Activated CD4-positive, alpha-beta T cell treated with anti-CD3 and anti-CD28 coated beads, Interleukin-2, amount 10 ng/mL, durations not matched to agents 7 days and 5 days (primary cell): ENCODE measurements at regions of chr11 and their contacts with region 1.

Region 1: GRCh38 chr11:120303004-120303637 is 22.0 kb upstream of the TLCD5 start:
- DNase-seq: peak; percentile 77
- H3K4me3 Mint-ChIP-seq: no peak overlapping the region
- H3K27ac Mint-ChIP-seq: no peak overlapping the region
- H3K4me1 Mint-ChIP-seq: no peaks in the 10 kb centered on the region
- H3K27me3 Mint-ChIP-seq: peaks cover 19% of the 10 kb centered on the region

Region 2: DNA sequence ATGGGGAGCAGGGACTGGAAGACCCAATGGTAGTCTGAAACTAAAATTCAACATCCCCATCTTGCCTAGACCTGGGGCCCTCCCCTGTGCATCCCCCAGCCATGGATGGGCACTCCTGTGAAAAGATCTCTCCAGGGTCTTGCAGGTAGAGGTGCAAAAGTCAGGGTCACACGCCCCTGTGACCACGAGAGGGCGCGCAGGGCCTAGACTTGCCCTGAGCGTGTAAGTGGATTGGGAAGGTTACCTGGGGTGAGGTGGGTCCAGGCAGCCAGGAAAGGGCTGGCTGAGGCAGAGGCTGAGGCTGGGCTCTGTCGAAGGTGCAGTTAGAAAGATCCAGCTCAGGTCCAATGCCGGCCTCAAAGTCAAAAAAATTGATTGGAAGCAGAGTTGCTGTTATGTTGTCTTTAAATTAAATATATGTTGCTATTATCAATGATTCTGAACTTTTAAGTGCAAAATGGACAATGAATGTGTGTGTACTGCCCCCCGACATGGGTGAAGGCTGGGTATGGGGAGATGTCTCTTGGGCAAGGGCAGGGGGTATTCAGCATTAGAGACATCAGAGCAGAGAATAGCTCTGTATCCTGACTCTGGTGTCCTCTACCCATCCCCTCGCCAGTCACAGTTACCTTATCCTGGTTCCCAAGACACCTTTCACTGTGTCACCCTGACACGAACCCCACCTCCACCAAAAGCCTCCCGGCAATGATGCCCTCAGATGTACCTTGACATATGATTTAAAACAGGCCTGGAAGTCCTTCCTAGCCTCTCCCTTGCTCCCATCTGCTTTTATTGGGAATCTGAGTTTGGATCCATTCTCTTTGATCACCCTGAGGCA is 67.9 kb before region 1 on chr11:
- CTCF ChIA-PET with region 1: interaction called, 105 read pairs
- POLR2A ChIA-PET with region 1: no interaction called
- DNase-seq: peak; percentile 65
- H3K4me3 Mint-ChIP-seq: no peak overlapping the region
- H3K27ac Mint-ChIP-seq: peak overlapping the region; percentile 47
- H3K4me1 Mint-ChIP-seq: no peaks in the 10 kb centered on the region
- H3K27me3 Mint-ChIP-seq: peaks cover 53% of the 10 kb centered on the region

Region 3: GRCh38 chr11:120248551-120249278 is 54.4 kb before region 1 on chr11:
- CTCF ChIA-PET with region 1: interaction called, 24 read pairs
- POLR2A ChIA-PET with region 1: no interaction called
- DNase-seq: no peak
- H3K4me3 Mint-ChIP-seq: no peak overlapping the region
- H3K27ac Mint-ChIP-seq: peak overlapping the region; percentile 16
- H3K4me1 Mint-ChIP-seq: peaks cover 48% of the 10 kb centered on the region
- H3K27me3 Mint-ChIP-seq: peaks cover 70% of the 10 kb centered on the region

Region 4: DNA sequence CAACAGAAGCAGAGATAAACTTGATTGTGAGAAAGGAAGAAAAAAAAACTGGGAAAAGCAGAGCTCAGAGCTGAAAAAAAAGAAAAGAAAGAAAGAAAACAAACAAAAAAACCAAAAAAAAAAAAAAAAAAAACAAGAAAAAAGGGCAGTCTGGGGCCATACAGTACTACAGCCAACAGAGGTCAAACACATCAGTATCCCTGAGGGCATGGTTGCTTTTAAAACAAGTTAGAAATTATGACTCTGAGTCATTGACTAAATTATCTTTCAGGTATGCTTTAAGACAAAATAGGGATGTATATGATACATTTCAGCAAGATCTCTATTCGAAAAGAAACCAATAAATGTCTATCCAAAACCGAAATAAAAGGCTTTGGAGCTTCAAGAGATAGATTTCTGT is 15.1 kb before region 1 on chr11:
- CTCF ChIA-PET with region 1: interaction called, 10 read pairs
- POLR2A ChIA-PET with region 1: no interaction called
- DNase-seq: no peak
- H3K4me3 Mint-ChIP-seq: no peak overlapping the region
- H3K27ac Mint-ChIP-seq: no peak overlapping the region
- H3K4me1 Mint-ChIP-seq: no peaks in the 10 kb centered on the region
- H3K27me3 Mint-ChIP-seq: peaks cover 37% of the 10 kb centered on the region